ENCODE measurements at regions of chr16 and their contacts with region 1.

Region 1: DNA sequence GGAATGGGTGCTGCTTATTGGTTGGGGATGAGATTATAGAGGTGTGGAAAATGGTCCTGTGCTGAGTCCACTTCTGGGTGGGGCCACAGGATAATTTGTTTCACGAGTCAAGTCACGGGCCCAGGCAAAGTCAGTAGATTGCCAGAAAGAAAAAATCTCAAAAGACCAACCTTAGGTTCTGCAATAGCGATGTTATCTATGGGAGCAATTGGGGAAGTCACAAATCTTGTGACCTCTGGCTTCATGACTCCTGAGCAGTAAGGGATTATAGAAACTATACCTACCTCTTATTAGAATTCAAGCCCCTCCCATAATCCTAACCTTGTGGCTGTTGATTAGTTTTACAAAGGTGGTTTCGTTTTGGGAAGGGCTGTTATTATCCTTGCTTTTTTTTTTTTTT is 31.4 kb downstream of the WWP2 start:
- DNase-seq: no peak
- ATAC-seq: no peak
- H3K4me3 ChIP-seq: no peak overlapping the region
- H3K27ac ChIP-seq: no peak overlapping the region
- H3K4me1 ChIP-seq: peaks cover 10% of the 10 kb centered on the region
- H3K27me3 ChIP-seq: no peaks in the 10 kb centered on the region
- CTCF ChIP-seq: no peak
- POLR2A ChIP-seq: no peak

Region 2: GRCh38 chr16:69890114-69890891 is 96.8 kb after region 1 on chr16:
- intact Hi-C with region 1: no loop called
- DNase-seq: peak; percentile 40 to 77 (median 68)
- ATAC-seq: peak; percentile 93
- H3K4me3 ChIP-seq: no peak overlapping the region
- H3K27ac ChIP-seq: peak overlapping the region; percentile 53 to 84 (median 74)
- H3K4me1 ChIP-seq: peaks cover 6% of the 10 kb centered on the region
- H3K27me3 ChIP-seq: no peaks in the 10 kb centered on the region
- CTCF ChIP-seq: no peak
- POLR2A ChIP-seq: peak in 2 of 3 donors; percentile 25 to 28

Region 3: GRCh38 chr16:69930117-69930776 is 136.7 kb after region 1 on chr16:
- intact Hi-C with region 1: loop called (anchors 5 kb)
- DNase-seq: peak; percentile 60 to 70 (median 62)
- ATAC-seq: peak; percentile 69
- H3K4me3 ChIP-seq: no peak overlapping the region
- H3K27ac ChIP-seq: no peak overlapping the region
- H3K4me1 ChIP-seq: peaks cover 19% of the 10 kb centered on the region
- H3K27me3 ChIP-seq: no peaks in the 10 kb centered on the region
- CTCF ChIP-seq: peak; percentile 56 to 78 (median 69)
- POLR2A ChIP-seq: no peak